Calu3 (cell line): ENCODE measurements at regions of chr2 and their contacts with region 1.

Region 1: DNA sequence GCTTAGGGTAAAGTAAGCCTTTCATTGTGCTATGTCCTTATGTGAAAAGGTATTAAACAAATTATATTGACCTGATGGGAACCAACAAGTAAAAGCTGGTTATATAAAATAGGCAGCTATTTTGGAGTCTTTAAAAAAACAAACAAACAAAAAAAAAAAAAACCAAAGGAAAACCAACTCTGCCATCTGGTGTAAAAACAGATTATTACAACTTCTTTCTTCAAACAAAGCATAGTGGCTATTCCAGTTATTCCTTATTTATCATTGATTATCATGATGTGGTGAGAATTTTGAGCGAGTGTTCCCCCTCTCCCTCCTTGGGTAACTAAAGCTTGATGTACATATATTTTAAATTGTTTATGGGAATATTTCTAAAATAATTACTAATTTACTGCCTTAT is 122.4 kb upstream of the FHL2 start:
- DNase-seq: no peak
- H3K4me3 Mint-ChIP-seq: no peak overlapping the region
- H3K27ac Mint-ChIP-seq: no peak overlapping the region
- H3K4me1 Mint-ChIP-seq: peaks cover 8% of the 10 kb centered on the region
- H3K27me3 Mint-ChIP-seq: no peaks in the 10 kb centered on the region
- CTCF ChIP-seq: peak; percentile 49

Region 2: GRCh38 chr2:105344704-105345345 is 176.4 kb before region 1 on chr2:
- CTCF ChIA-PET with region 1: interaction called, 10 read pairs
- intact Hi-C with region 1: loop called (anchors 1 kb)
- DNase-seq: no peak
- H3K4me3 Mint-ChIP-seq: no peak overlapping the region
- H3K27ac Mint-ChIP-seq: no peak overlapping the region
- H3K4me1 Mint-ChIP-seq: peaks cover 10% of the 10 kb centered on the region
- H3K27me3 Mint-ChIP-seq: no peaks in the 10 kb centered on the region
- CTCF ChIP-seq: no peak

Region 3: GRCh38 chr2:105369747-105370690 is 151.2 kb before region 1 on chr2:
- CTCF ChIA-PET with region 1: interaction called, 3 read pairs
- intact Hi-C with region 1: loop called (anchors 1 kb)
- DNase-seq: peak; percentile 84
- H3K4me3 Mint-ChIP-seq: no peak overlapping the region
- H3K27ac Mint-ChIP-seq: peak overlapping the region; percentile 48
- H3K4me1 Mint-ChIP-seq: peaks cover 26% of the 10 kb centered on the region
- H3K27me3 Mint-ChIP-seq: no peaks in the 10 kb centered on the region
- CTCF ChIP-seq: peak; percentile 70

Region 4: DNA sequence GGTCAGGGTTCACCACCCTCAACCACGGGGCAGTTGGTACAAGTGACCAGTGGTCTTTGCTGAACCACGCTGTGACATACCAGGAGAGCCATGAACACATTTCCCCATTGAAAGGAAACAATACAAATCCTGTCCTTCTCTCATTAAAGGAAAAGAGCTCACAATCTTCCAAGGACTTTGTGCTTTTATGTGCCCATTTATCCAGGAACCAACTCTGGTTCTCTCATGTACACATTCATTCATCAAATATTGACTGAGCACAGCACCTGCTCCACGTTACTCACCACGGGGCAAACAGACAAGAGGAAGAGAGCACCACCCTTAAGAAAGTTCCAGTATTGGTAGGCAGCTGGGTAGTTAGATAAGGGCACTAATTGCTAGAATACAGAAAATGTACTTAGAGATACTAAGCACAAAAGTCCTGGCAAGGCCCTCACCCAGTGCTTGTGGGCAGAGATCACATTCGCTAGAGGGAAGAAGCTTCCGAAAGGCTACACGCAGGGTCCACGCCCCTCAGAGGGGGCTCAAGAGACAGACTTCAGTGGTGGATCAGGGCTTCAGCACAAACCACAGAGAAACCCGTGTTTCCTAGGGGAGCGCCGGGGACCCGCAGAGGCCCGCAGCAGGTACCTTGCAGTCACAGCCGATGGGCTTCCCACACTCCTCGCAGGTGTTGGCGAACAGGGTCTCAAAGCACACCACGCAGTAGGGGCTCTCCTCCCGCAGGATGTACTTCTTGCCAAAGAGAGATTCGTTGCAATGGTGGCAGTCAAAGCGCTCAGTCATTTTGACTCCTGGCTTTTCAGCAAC is 135.3 kb before region 1 on chr2:
- CTCF ChIA-PET with region 1: no interaction called
- intact Hi-C with region 1: no loop called
- DNase-seq: no peak
- H3K4me3 Mint-ChIP-seq: no peak overlapping the region
- H3K27ac Mint-ChIP-seq: no peak overlapping the region
- H3K4me1 Mint-ChIP-seq: peaks cover 27% of the 10 kb centered on the region
- H3K27me3 Mint-ChIP-seq: no peaks in the 10 kb centered on the region
- CTCF ChIP-seq: no peak

Region 5: GRCh38 chr2:105397964-105398698 is 123.1 kb before region 1 on chr2:
- CTCF ChIA-PET with region 1: interaction called, 3 read pairs
- intact Hi-C with region 1: loop called (anchors 2 kb)
- DNase-seq: peak; percentile 45
- H3K4me3 Mint-ChIP-seq: peak overlapping the region; percentile 84
- H3K27ac Mint-ChIP-seq: peak overlapping the region; percentile 74
- H3K4me1 Mint-ChIP-seq: peaks cover 37% of the 10 kb centered on the region
- H3K27me3 Mint-ChIP-seq: no peaks in the 10 kb centered on the region
- CTCF ChIP-seq: no peak

Region 6: GRCh38 chr2:105604938-105605337 is 83.7 kb after region 1 on chr2:
- CTCF ChIA-PET with region 1: no interaction called
- intact Hi-C with region 1: no loop called
- DNase-seq: no peak
- H3K4me3 Mint-ChIP-seq: no peak overlapping the region
- H3K27ac Mint-ChIP-seq: no peak overlapping the region
- H3K4me1 Mint-ChIP-seq: peaks cover 8% of the 10 kb centered on the region
- H3K27me3 Mint-ChIP-seq: no peaks in the 10 kb centered on the region
- CTCF ChIP-seq: no peak